Heart left ventricle (tissue), 16 donors: ENCODE measurements at regions of chr3 and their contacts with region 1.

Region 1: DNA sequence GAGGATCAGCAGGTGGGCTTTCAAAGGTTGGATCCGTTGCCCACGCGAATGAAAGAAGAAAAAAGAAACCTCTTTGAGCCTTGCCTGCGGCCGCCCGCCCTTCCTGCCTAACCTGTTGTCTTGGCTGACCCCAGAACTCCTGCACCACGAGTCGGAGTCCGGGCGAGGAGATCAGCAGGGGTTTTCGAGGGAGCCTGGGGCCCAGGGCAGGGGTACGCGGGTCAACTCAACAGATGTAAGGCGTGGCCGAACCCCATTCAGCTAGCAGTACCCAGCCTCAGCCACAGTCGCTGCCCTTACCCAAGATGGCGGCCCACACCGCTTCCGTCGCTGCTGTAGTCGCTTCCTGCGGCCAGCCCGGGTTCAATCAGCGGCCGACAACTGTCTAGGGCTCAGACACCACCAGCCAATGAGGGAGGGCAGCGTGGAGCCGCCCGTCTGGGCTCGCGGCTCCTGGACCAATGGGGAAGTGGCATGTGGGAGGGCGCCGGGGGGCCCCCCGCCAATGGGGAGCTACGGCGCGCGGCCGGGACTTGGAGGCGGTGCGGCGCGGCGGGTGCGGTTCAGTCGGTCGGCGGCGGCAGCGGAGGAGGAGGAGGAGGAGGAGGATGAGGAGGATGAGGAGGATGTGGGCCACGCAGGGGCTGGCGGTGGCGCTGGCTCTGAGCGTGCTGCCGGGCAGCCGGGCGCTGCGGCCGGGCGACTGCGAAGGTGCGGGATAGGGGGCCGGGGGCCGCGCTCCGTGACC is at the start of gene MANF:
- DNase-seq: peak; percentile 98 to 99 (median 99)
- ATAC-seq: peak; percentile 98 to 99 (median 98)
- H3K4me3 ChIP-seq: peak within 1 kb of the TSS; percentile 76 to 97 (median 82)
- H3K27ac ChIP-seq: peak within 1 kb of the TSS; percentile 84 to 97 (median 94)
- H3K4me1 ChIP-seq: peaks cover 12 to 51% (median 37%) of the 10 kb centered on the region in 12 donors
- H3K27me3 ChIP-seq: no peaks in the 10 kb centered on the region
- CTCF ChIP-seq: peak in 3 of 12 donors; percentile 7 to 13 (median 12)
- POLR2A ChIP-seq: peak; percentile 77 to 97
- total RNA-seq, gene MANF: 22.3 to 87.2 (median 47.5) TPM

Region 2: DNA sequence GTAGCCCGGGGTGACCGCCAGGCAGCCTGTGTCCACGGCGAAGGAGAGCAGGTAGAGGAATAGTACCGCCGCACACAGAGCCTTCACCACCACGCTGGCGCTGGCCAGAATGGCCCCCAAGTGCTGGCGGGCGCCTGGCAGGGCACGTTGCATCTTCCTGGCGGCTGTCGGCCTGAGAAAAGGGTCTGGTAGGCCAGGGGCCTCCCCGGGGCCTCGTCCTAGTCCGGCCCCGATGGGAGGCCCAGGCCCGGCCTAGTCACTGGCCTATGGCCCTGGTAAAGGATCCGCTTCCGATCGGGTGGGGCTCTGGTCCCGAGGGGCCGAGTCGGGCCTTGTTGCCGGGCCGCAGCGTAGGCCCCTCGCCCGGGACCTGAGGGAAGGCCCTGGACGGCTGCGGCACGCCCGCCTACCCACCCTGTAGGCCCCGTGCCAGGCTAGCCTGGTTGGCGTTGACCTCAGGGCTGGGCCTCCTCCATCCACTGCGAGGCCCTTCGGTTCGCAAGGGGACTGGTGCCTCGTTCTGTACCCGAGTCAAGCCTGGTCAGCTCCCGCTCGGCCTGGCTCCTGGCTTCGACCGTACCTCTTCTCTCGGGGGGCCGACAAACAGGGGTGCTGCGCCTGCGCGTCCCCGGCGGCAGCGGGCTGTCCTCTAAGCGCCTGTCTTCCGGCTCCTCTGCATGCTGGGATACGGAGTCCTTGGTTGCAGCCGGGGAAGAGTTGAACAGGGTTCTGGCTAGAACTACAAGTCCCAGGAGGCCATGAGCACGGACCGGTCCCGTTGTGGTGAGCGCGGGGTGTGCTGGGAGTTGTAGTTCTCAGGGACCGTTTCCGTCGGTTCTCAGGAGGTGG is 1025.8 kb before region 1 on chr3 and contains the start of gene TMEM115:
- intact Hi-C with region 1: loop called in 1 of 10 experiments (anchors 10 kb)
- DNase-seq: peak; percentile 96 to 99 (median 99)
- ATAC-seq: peak; percentile 97 to 99 (median 98)
- H3K4me3 ChIP-seq: peak within 1 kb of the TSS; percentile 60 to 97 (median 80)
- H3K27ac ChIP-seq: peak within 1 kb of the TSS; percentile 77 to 97 (median 90)
- H3K4me1 ChIP-seq: peaks cover 19 to 51% (median 40%) of the 10 kb centered on the region in 12 donors
- H3K27me3 ChIP-seq: no peaks in the 10 kb centered on the region
- CTCF ChIP-seq: no peak
- POLR2A ChIP-seq: peak in 1 of 2 donors; percentile 73
- total RNA-seq, gene TMEM115: 20.5 to 56.4 (median 28.9) TPM

Region 3: DNA sequence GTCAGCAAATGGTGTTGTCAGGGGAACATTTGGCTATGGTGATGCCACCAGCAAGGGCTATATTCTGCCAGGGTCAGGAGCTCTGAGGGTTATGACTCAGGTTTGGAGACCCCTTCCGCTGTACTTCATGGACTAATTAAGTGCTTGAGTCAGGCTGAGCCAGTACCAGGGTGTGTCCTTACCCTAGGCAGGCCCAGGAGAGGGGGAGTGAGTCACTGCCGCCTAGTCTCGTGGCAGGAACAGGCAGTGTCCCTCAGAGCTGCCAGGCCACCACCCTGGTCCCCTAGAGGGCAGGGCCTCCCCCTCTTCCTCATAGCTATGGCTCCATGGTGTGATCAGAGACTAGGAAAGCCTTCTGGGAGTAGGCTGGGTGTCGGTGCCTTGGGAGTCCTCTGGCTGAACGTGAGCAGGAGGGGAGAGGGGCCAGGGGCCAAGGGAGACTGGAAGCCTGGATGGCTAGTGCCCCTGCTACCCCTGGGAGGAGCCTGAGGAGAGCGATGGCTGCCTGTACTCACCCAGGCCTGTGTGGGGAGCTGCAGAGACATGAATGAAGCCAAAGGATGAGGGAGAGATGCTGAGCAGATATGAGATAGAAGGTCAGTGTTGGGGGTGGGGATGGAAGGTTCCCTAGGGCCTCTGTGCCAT is 757.4 kb before region 1 on chr3:
- intact Hi-C with region 1: loop called in 1 of 10 experiments (anchors 5 kb)
- DNase-seq: peak; percentile 49 to 91 (median 73)
- ATAC-seq: peak; percentile 74 to 92 (median 88)
- H3K4me3 ChIP-seq: no peak overlapping the region
- H3K27ac ChIP-seq: peak overlapping the region; percentile 40 to 99 (median 70)
- H3K4me1 ChIP-seq: peaks cover 0 to 99% (median 68%) of the 10 kb centered on the region in 12 donors
- H3K27me3 ChIP-seq: no peaks in the 10 kb centered on the region
- CTCF ChIP-seq: peak in 8 of 12 donors; percentile 5 to 48 (median 34)
- POLR2A ChIP-seq: no peak

Region 4: GRCh38 chr3:51670823-51671733 is 286.2 kb after region 1 on chr3 and contains the start of gene TEX264:
- intact Hi-C with region 1: loop called in 6 of 10 experiments (anchors 5 to 10 kb)
- DNase-seq: peak; percentile 91 to 97 (median 94)
- ATAC-seq: peak; percentile 63 to 95 (median 91)
- H3K4me3 ChIP-seq: peak within 1 kb of the TSS; percentile 72 to 97 (median 86)
- H3K27ac ChIP-seq: peak within 1 kb of the TSS; percentile 84 to 99 (median 96)
- H3K4me1 ChIP-seq: peaks cover 2 to 64% (median 36%) of the 10 kb centered on the region in 12 donors
- H3K27me3 ChIP-seq: no peaks in the 10 kb centered on the region
- CTCF ChIP-seq: no peak
- POLR2A ChIP-seq: peak in 1 of 2 donors; percentile 89
- total RNA-seq, gene TEX264: 29.5 to 64.0 (median 36.9) TPM